ENCODE measurements at regions of chr15 and their contacts with region 1.

Region 1: GRCh38 chr15:43376017-43376705 is 5.3 kb downstream of the TUBGCP4 start:
- DNase-seq: peak; percentile 27
- ATAC-seq: peak; percentile 73
- H3K4me3 ChIP-seq: no peak overlapping the region
- H3K27ac ChIP-seq: no peak overlapping the region
- H3K4me1 ChIP-seq: peaks cover 0 to 10% of the 10 kb centered on the region in 2 experiments; a peak in 3 of 4 replicates
- H3K27me3 ChIP-seq: no peaks in the 10 kb centered on the region
- CTCF ChIP-seq: peak; percentile 69 to 94 (median 89); a peak in 5 of 6 replicates
- POLR2A ChIP-seq: no peak
- RAD21 ChIP-seq: no peak; the same call in 1 of the 2 replicates

Region 2: GRCh38 chr15:43390723-43391122 is 14.6 kb after region 1 on chr15:
- CTCF ChIA-PET with region 1: interaction called, 11 read pairs
- POLR2A ChIA-PET with region 1: no interaction called
- RAD21 ChIA-PET with region 1: no interaction called
- intact Hi-C with region 1: no loop called
- DNase-seq: no peak
- ATAC-seq: no peak
- H3K4me3 ChIP-seq: no peak overlapping the region
- H3K27ac ChIP-seq: no peak overlapping the region
- H3K4me1 ChIP-seq: no peaks in the 10 kb centered on the region
- H3K27me3 ChIP-seq: no peaks in the 10 kb centered on the region
- CTCF ChIP-seq: no peak
- POLR2A ChIP-seq: no peak
- RAD21 ChIP-seq: no peak